A673 (cell line): ENCODE measurements at regions of chr11 and their contacts with region 1.

Region 1: DNA sequence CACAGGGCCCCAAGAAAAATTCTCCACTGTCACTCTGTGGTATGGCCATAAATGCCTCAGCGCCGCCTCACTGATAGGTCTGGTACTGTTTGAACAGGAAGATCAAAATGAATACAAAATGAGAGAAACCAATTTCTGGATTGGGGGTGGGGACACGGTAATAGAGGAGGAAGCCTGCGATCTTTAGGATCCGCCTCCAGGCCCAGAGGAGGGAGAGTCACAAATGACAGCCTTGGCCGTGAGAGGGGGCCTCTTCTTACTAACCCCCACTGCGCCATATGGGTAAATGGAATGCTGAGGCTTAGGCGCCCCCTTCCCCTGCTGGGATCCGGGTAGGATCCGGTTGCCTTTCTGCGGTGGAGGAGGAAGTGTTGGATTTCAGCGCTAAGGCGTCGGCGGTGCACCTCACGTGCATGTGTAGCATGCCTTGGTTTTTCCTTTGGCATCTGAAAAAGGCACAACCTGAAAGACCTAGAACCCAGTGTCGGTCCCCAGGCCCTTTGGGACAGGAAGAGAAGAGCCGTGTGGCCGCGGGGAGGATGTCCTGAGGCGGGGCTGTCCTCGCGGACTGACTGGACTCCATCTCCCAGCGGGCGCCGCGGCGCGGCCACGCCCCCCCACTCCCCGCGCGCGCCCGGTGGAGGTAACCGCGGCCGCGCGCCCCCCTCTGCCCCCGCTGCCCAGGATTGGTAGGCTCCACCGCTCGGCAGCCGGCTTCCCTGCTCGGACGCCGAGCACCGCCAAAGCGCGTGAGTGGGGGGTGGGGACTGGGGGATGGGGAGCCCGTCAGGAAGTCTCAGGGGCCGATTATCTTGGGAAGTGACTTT is 718 bp upstream of the MADD start:
- DNase-seq: peak; percentile 99
- H3K4me3 ChIP-seq: peak overlapping the region; percentile 65
- H3K27ac ChIP-seq: peak overlapping the region; percentile 95
- H3K4me1 ChIP-seq: peaks cover 42% of the 10 kb centered on the region
- H3K27me3 ChIP-seq: no peaks in the 10 kb centered on the region
- CTCF ChIP-seq: peak; percentile 54

Region 2: GRCh38 chr11:47213985-47214564 is 55.1 kb before region 1 on chr11:
- CTCF ChIA-PET with region 1: interaction called, 17 read pairs
- POLR2A ChIA-PET with region 1: no interaction called
- intact Hi-C with region 1: loop called (anchors 2 kb)
- DNase-seq: peak; percentile 99
- H3K4me3 ChIP-seq: peak overlapping the region; percentile 62
- H3K27ac ChIP-seq: peak overlapping the region; percentile 86
- H3K4me1 ChIP-seq: peaks cover 16% of the 10 kb centered on the region
- H3K27me3 ChIP-seq: no peaks in the 10 kb centered on the region
- CTCF ChIP-seq: no peak

Region 3: GRCh38 chr11:47233989-47234668 is 35.1 kb before region 1 on chr11:
- CTCF ChIA-PET with region 1: interaction called, 3 read pairs
- POLR2A ChIA-PET with region 1: interaction called, 10 read pairs
- intact Hi-C with region 1: no loop called
- DNase-seq: peak; percentile 75
- H3K4me3 ChIP-seq: no peak overlapping the region
- H3K27ac ChIP-seq: no peak overlapping the region
- H3K4me1 ChIP-seq: peaks cover 14% of the 10 kb centered on the region
- H3K27me3 ChIP-seq: no peaks in the 10 kb centered on the region
- CTCF ChIP-seq: peak; percentile 60

Region 4: DNA sequence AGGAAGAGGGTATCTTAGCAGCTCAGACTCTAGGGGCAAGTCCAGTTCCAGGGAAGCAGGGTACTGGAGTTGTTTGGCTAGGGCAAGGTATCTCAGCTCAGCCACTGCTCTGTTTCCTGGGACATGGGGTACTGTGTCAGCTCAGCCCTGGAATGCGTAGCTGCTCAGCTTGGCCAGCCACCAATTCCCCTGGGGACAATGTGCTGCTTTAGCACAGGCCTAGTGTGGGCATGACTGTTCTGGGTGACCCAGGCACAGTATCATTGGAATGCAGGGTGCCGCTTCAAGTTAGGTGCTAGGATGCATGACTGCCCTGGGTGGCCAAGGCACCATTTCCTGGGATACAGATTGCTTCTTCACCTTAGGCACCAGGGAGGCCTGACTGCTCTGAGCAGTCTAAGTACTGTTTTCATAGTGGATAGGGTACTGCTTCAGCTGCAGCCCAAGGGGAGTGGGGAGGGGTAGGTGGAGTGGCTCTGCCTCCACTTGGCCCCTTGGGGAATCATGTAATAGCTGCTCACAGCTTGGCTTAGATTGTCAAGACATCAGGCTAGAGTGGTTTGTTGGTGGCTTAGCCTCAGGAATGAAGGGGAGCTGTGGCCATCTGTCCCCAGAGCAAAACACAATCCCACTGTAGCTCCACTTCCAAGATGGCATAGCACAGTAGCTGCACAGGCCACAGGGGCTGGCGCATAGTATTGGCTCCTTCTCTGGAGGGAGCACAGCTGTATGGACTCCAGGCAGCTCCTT is 36.7 kb after region 1 on chr11:
- CTCF ChIA-PET with region 1: no interaction called
- POLR2A ChIA-PET with region 1: no interaction called
- intact Hi-C with region 1: loop called (anchors 5 kb)
- DNase-seq: peak; percentile 58
- H3K4me3 ChIP-seq: no peak overlapping the region
- H3K27ac ChIP-seq: peak overlapping the region; percentile 31
- H3K4me1 ChIP-seq: peaks cover 5% of the 10 kb centered on the region
- H3K27me3 ChIP-seq: no peaks in the 10 kb centered on the region
- CTCF ChIP-seq: no peak

Region 5: GRCh38 chr11:47328404-47329390 is 59.5 kb after region 1 on chr11:
- CTCF ChIA-PET with region 1: no interaction called
- POLR2A ChIA-PET with region 1: no interaction called
- intact Hi-C with region 1: loop called (anchors 5 kb)
- DNase-seq: no peak
- H3K4me3 ChIP-seq: no peak overlapping the region
- H3K27ac ChIP-seq: no peak overlapping the region
- H3K4me1 ChIP-seq: no peaks in the 10 kb centered on the region
- H3K27me3 ChIP-seq: no peaks in the 10 kb centered on the region
- CTCF ChIP-seq: no peak

Region 6: DNA sequence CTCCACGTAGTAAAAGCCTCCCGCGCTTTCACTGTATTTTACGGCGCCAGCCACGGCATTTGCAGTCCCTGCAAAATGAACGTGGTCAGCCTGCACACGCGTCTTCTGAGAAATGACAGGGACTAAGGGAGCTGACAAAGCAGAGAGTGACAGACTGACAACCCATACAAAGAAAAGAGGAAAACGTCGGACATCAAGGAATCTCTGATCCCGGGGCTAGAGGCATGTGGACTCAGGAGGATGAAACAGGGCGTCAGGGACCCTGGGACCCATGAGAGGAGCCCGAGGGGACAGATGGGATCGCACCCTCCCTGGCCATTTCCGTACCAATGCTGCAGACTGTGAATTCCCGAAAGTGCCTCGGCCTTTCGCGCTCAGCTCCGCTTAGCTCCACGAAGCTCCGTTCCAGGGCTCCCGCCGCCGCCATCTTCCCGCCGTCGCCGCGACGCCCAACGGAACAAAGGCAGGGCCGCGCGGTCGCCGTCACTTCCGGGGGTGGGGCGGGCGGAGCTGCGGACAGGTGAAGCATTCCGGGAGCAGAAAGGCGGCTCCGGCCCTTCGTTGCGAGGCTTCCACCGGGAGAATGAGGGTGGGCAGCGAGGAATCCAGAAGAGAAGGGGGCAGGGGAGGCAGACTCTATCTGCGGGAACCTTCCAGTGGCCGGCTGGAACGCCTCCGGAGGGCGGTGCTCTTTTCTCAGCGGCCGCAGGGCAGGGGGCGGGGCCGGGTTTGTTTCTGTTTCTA is 578.8 kb after region 1 on chr11 and contains the start of gene NUP160:
- CTCF ChIA-PET with region 1: no interaction called
- POLR2A ChIA-PET with region 1: no interaction called
- intact Hi-C with region 1: loop called (anchors 5 kb)
- DNase-seq: peak; percentile 93
- H3K4me3 ChIP-seq: peak within 1 kb of the TSS; percentile 62
- H3K27ac ChIP-seq: peak within 1 kb of the TSS; percentile 93
- H3K4me1 ChIP-seq: peaks cover 13% of the 10 kb centered on the region
- H3K27me3 ChIP-seq: no peaks in the 10 kb centered on the region
- CTCF ChIP-seq: 0 out of 2 replicates have a peak, but pooled peaks have one; percentile 27
- total RNA-seq, gene NUP160: 162 and 172 TPM in 2 replicates